ENCODE measurements at regions of chr4 and their contacts with region 1.

Region 1: DNA sequence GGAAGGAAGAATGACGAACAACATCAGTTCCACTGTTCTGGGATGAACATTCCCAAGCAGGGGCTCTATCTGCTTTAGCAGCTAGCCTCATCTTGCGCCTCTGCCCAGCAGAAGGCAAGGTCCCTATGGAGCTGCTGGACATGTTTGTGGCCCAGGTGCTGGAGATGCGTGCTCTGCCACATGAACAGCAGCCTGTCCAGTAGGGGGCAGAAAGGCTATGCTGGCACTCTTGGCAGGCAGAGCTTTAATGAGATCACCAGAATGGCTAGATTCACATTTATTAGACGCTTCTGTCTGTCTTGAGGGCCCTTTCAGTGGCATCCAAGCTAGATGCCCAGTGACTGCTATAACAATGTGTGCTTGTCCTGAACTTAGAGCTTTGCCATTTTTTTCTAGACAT is 1826.0 kb downstream of the STIM2 start:
- DNase-seq: peak; percentile 77
- H3K4me3 ChIP-seq: no peak overlapping the region
- H3K27ac ChIP-seq: no peak overlapping the region
- H3K4me1 ChIP-seq: no peaks in the 10 kb centered on the region
- H3K27me3 ChIP-seq: no peaks in the 10 kb centered on the region
- CTCF ChIP-seq: peak; percentile 73

Region 2: GRCh38 chr4:28868841-28869240 is 182.2 kb after region 1 on chr4:
- CTCF ChIA-PET with region 1: no interaction called
- POLR2A ChIA-PET with region 1: no interaction called
- intact Hi-C with region 1: no loop called
- DNase-seq: no peak
- H3K4me3 ChIP-seq: no peak overlapping the region
- H3K27ac ChIP-seq: no peak overlapping the region
- H3K4me1 ChIP-seq: no peaks in the 10 kb centered on the region
- H3K27me3 ChIP-seq: no peaks in the 10 kb centered on the region
- CTCF ChIP-seq: no peak

Region 3: DNA sequence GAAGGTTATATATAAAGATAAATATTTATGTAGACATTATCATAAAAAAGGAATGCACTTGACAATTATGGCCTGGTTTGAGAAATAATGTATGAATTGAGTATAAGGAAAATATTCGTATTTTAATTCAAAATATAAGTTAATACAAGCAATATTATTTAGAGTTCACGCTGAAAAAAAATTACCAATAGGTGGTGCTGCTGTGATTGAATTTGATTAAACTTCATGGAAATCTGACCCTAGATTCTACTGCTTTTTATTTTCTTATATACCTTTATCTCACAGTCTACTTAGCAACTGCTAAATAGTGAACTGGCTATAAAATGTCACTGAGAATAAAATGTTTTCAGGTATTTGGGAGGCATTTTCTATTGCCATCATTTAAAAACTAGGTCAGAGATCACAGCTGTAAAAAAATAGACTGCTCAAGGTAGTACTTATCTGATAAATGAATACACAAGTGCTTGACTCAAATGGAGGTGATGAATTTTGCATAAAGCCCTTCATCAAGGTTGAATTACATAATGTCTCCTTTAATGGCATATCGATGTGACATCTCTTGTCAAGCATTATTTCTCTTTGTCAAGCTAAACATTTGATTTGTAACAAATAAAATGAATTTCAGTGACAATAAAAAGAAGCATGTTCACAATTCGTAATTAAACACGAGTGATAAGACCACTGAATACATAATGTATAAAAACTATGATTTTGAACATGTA is 394.8 kb after region 1 on chr4:
- CTCF ChIA-PET with region 1: no interaction called
- POLR2A ChIA-PET with region 1: no interaction called
- intact Hi-C with region 1: loop called (anchors 10 kb)
- DNase-seq: peak; percentile 55
- H3K4me3 ChIP-seq: no peak overlapping the region
- H3K27ac ChIP-seq: no peak overlapping the region
- H3K4me1 ChIP-seq: peaks cover 5% of the 10 kb centered on the region
- H3K27me3 ChIP-seq: no peaks in the 10 kb centered on the region
- CTCF ChIP-seq: peak; percentile 69